Ascending aorta (tissue), 2 donors: ENCODE measurements at regions of chr6 and their contacts with region 1.

Region 1: GRCh38 chr6:156776840-156777576 is at the start of gene ARID1B:
- DNase-seq: peak in 1 of 2 donors; percentile 91
- H3K4me3 ChIP-seq: peak within 1 kb of the TSS; percentile 76 to 99
- H3K27ac ChIP-seq: peak within 1 kb of the TSS; percentile 97 to 100
- H3K4me1 ChIP-seq: peaks cover 0 to 26% of the 10 kb centered on the region in 2 donors
- H3K27me3 ChIP-seq: no peaks in the 10 kb centered on the region
- CTCF ChIP-seq: no peak
- total RNA-seq, gene ARID1B: 97.9 TPM

Region 2: DNA sequence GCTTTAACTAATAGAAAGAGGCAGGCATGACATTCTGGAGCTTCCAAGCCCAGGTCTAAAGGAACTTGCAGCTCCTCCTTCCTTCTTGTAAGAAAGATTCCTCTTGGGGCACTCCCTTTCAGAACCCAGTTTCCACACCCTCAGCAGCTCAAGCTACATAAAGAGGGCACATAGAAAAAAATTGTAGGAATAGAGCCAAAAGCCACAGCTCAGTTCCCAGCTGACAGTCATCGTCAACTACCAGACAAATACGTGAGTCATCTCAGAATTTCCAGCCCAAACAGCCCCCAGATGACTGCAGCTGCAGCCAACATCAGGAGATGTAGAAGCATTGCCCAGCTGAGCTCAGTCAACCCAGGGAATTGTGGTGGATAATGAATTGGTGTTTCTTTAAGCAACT is 349.7 kb before region 1 on chr6:
- intact Hi-C with region 1: loop called (anchors 10 kb)
- DNase-seq: peak; percentile 51 to 84
- H3K4me3 ChIP-seq: no peak overlapping the region
- H3K27ac ChIP-seq: peak overlapping the region; percentile 31 to 60
- H3K4me1 ChIP-seq: no peaks in the 10 kb centered on the region
- H3K27me3 ChIP-seq: no peaks in the 10 kb centered on the region
- CTCF ChIP-seq: no peak

Region 3: DNA sequence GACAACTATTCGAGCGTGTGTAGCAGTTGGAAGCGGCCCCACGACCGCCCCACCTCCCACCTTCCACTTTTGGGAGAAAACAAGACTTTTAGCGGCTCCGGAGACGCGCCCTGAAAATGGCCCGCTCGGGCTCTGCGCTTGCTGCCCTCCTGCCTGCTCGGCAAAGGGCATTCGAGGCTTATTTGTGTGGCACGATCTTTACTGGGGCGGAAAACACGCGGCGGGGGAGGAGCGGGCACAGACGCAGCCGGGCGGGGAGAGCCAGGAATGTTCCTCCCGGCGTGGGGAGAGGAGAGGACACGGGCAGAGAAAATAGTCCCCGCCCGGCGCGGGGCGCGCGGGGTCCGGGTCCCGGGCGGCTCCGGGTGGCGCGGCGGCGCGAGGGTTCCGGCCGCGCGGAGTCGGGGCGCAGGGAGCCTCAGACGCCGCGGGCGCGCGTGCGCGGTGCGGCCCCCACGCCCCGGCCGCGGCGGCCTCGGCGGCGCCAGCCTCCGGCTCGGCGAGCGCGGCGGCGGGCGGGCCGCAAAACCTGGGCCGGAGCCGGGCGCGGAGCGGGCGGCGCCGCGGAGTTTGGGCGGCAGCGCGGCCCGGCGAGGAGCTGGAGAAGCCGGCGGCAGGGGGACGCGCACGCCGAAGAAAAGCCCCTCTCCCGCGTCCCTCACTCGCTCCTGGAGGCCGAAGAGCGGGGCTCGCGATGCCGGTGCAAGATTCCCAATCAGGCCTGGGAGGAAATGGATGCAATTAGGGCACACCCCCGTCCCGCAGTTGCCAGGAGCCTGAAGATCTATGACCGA is 89.8 kb before region 1 on chr6:
- intact Hi-C with region 1: loop called (anchors 1 kb)
- DNase-seq: peak; percentile 77 to 97
- H3K4me3 ChIP-seq: peak overlapping the region; percentile 71 to 93
- H3K27ac ChIP-seq: peak overlapping the region; percentile 97
- H3K4me1 ChIP-seq: peaks cover 0 to 6% of the 10 kb centered on the region in 2 donors
- H3K27me3 ChIP-seq: no peaks in the 10 kb centered on the region
- CTCF ChIP-seq: no peak

Region 4: DNA sequence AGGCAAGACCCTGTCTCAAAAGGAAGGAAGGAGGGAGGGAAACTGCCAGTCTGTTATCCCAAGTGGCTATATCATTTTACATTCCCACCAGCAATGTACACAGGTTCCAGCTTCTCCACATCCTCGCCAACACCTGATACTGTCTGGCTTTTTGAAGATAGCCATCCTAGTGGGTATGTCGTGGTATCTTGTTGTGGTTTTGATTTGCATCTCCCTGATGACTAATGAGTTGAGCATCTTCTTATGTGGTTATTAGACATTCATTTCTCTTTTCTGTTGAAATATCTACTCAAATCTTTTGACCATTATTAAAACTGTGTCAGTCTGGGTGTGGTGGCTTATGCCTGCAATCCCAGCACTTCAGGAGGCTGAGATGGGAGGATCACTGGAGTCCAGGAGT is 47.8 kb before region 1 on chr6:
- intact Hi-C with region 1: no loop called
- DNase-seq: no peak
- H3K4me3 ChIP-seq: no peak overlapping the region
- H3K27ac ChIP-seq: no peak overlapping the region
- H3K4me1 ChIP-seq: no peaks in the 10 kb centered on the region
- H3K27me3 ChIP-seq: no peaks in the 10 kb centered on the region
- CTCF ChIP-seq: no peak

Region 5: DNA sequence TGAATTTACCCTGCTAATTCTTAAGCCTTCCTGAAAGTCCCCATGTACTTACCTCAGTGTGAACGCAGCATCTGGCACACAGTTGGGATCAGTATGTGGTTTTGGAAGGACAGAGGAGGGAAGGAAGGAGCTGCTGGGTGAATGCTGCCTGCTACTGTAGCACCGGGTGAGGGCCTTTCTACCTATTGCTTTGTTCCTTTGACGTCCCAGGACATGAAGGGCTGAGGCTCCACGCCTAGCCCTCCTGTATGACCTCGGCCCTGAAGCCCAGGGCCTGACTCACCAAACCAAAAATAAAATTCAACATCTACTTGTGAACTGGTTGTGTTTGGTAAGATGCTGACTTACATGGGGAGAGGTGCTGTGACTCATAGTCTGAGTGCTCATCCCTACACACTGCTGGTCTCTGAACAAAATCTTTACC is 51.3 kb after region 1 on chr6:
- intact Hi-C with region 1: loop called (anchors 5 kb)
- DNase-seq: no peak
- H3K4me3 ChIP-seq: no peak overlapping the region
- H3K27ac ChIP-seq: peak overlapping the region; percentile 80 to 91
- H3K4me1 ChIP-seq: peaks cover 2 to 47% of the 10 kb centered on the region in 2 donors
- H3K27me3 ChIP-seq: no peaks in the 10 kb centered on the region
- CTCF ChIP-seq: no peak

Region 6: DNA sequence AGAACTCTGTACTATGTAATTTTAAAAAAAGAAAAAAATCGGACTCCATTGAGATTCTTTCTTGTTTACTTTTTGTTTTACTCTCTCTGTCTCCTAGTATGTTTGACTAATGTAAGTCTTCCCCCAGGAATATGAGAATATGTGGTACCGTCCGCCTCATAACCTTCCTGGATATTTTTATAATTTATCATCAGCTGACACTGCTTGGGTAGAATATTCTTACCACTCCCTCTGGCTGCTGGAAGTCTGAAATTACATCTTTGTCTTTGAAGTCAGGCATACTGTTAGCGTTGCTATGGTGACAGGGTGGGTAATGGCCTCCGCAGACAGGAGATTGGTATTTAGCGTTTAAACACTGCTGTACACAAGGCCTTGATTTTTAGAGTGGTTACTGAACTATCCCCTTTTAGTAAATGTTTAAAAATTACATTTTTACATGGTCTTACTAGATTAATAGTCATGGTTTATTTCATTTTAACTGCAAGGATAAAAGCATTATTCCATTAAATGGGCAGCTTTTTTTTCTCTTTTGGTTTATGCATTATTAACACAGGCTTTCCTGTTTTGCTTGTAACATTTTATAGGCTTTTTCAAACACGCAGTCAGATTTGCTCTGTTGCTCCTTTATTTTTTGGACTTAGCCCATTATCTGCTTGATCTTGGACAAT is 176.6 kb after region 1 on chr6:
- intact Hi-C with region 1: loop called (anchors 2 kb)
- DNase-seq: no peak
- H3K4me3 ChIP-seq: no peak overlapping the region
- H3K27ac ChIP-seq: no peak overlapping the region
- H3K4me1 ChIP-seq: peaks cover 5 to 32% of the 10 kb centered on the region in 2 donors
- H3K27me3 ChIP-seq: no peaks in the 10 kb centered on the region
- CTCF ChIP-seq: peak in 2 of 3 experiments; percentile 17 to 37

Region 7: DNA sequence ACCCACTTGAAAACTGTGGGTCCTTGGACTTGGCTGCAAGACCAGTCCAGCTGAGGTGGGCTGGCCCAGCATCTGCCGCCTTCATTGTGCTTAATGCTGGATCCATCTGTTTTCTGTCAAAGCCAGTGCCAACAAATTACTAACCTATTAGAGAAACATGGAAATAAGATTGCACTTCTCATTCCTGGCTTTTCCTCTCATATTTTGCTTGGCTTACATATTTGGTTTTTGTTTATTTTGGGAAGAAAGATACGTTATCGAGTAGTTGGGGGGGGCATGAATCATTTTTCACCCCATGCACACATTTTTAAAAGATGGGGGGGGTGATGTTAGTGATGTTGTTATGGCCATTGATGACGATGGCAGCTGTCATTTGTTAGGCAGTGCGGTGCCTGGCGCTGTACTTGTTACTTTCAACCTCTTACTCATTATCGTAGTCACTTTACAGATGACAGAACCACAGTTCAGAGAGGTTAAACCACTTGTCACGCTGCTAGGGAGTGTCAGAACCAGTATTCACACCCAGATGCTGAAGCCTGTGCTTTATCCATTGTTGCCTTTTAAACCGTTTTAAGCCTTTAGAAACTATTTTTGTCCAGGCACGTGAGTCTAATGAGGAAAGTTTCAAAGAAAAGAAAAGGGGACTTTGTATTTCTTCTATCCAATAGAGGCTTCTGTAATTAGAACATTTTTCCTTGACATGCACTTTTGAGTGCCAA is 366.3 kb after region 1 on chr6:
- intact Hi-C with region 1: loop called (anchors 5 kb)
- DNase-seq: peak in 1 of 2 donors; percentile 86
- H3K4me3 ChIP-seq: peak overlapping the region; percentile 4 to 36
- H3K27ac ChIP-seq: peak overlapping the region; percentile 67 to 78
- H3K4me1 ChIP-seq: peaks cover 13 to 38% of the 10 kb centered on the region in 2 donors
- H3K27me3 ChIP-seq: no peaks in the 10 kb centered on the region
- CTCF ChIP-seq: no peak

Region 8: GRCh38 chr6:157274471-157275226 is 497.6 kb after region 1 on chr6:
- intact Hi-C with region 1: loop called (anchors 5 kb)
- DNase-seq: peak; percentile 53 to 91
- H3K4me3 ChIP-seq: peak overlapping the region; percentile 75 to 86
- H3K27ac ChIP-seq: peak overlapping the region; percentile 97 to 98
- H3K4me1 ChIP-seq: peaks cover under 1 to 24% of the 10 kb centered on the region in 2 donors
- H3K27me3 ChIP-seq: no peaks in the 10 kb centered on the region
- CTCF ChIP-seq: peak in 2 of 3 experiments; percentile 49 to 99

Region 9: DNA sequence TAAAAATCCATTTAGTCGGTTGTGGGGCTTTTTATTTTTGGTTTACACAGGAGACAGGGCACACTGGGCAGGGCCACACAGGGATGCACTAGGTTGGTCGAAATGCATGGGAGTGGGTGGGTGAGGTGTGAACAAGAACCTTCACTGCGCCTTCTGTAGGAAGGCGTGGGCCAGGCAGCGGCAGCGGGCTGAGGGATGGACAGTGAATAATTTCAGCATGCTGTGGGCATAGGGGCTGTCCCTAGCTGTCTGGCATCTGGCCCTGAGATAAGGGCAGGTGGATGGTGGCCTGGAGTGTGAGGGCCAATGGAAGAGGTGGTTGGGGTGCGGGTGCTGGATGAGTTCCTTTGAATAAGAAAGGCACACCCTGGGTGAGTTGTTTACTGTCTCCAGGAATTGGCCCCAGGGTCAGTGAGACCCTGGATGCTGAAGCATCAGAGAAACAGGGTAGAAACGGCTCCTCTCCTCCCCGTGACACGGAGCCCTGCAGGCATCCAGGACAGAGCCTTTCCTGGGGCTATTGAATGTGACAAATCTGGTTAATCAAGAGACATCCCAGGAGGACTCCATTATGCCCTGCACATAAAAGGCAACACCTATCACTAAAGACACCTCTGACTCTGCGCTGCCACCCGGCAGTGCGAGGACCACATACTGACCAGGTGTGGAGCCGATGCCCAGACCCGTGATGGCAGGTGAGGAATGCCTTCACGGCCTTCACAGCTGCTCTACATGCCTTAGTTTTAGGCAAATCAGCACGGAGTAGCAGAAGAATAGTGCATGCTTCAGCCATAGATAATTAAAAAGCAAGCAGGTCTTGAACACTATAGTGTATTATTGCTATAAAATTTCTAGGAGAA is 923.0 kb after region 1 on chr6:
- intact Hi-C with region 1: no loop called
- DNase-seq: no peak
- H3K4me3 ChIP-seq: no peak overlapping the region
- H3K27ac ChIP-seq: no peak overlapping the region
- H3K4me1 ChIP-seq: no peaks in the 10 kb centered on the region
- H3K27me3 ChIP-seq: no peaks in the 10 kb centered on the region
- CTCF ChIP-seq: no peak